ENCODE measurements at regions of chr2 and their contacts with region 1.

Region 1: DNA sequence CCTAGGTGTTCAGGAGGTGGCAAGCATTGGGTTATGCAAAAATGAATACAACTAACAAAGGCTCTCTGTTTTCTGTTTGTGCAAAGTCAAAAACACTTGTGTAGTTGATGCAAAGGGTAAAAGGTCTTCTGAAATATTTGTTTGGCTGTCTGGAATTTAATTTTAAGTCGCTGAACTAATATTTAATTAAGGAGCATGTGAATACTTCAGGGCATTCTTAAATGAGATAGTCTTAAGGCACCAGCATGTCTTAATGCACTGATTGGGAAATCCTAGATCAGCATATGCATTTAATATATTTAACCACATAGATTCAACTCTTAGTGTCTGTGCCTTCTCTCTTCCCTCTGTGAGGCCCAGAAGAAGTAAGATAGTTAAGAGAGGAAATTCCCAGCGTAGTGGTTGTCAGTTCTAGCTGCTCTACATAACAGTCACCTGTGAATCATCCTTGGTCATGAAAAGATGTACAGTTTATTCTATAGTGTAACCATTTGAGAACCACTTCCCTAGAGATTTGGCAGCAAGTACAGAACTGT is 111.9 kb downstream of the EPC2 start:
- ATAC-seq: peak in 3 of 8 experiments; percentile 47 to 59 (median 50)
- H3K4me3 ChIP-seq: no peak overlapping the region
- H3K27ac ChIP-seq: no peak overlapping the region
- H3K4me1 ChIP-seq: no peaks in the 10 kb centered on the region

Region 2: GRCh38 chr2:148402786-148403185 is 353.7 kb before region 1 on chr2:
- in situ Hi-C with region 1: no loop called
- ATAC-seq: no peak
- H3K4me3 ChIP-seq: no peak overlapping the region
- H3K27ac ChIP-seq: no peak overlapping the region
- H3K4me1 ChIP-seq: peaks cover 0 to 2% of the 10 kb centered on the region in 2 donors

Region 3: GRCh38 chr2:148874868-148875341 is 118.4 kb after region 1 on chr2 and contains the start of gene KIF5C:
- in situ Hi-C with region 1: loop called in 1 of 9 experiments (anchors 25 kb)
- ATAC-seq: peak; percentile 60 to 97 (median 64)
- H3K4me3 ChIP-seq: peak within 1 kb of the TSS; percentile 87 to 100 (median 95)
- H3K27ac ChIP-seq: peak within 1 kb of the TSS; percentile 87 to 93
- H3K4me1 ChIP-seq: peaks cover 4 to 7% of the 10 kb centered on the region in 2 donors
- total RNA-seq, gene KIF5C: 0.31 to 271 (median 222) TPM